Activated CD8-positive, alpha-beta T cell treated with anti-CD3 and anti-CD28 coated beads for 36 hours (primary cell): ENCODE measurements at regions of chr18 and their contacts with region 1.

Region 1: DNA sequence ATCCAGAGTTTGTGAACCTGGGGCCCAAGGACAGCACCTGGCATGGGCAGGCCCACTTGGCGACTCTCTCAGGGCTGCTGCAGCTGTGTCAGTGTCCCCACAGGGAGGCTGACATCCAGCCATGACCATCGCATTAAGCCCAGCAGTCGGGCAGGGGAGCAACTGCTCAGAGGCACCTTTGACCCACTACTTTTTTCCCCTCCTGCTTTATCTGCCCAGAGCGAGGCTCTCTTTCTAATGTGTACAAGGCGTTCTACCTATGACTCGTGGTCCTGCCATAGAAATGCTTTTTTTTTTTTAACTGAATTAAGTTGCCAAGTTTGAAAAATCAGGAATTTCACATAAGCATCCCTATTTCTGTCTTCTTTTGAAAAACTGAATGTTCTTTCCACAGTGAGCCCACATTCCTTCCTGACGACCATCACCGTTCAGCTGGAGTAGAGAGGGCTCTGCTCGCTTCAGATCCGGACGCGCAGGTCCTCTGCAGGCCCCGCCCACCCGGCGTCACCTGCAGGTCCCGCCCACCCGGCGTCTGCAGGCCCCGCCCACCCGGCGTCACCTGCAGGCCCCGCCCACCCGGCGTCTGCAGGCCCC is 403 bp upstream of the CLUL1 start:
- DNase-seq: peak; percentile 3
- ATAC-seq: peak; percentile 76
- H3K4me3 Mint-ChIP-seq: peak overlapping the region; percentile 35
- H3K27ac Mint-ChIP-seq: no peak overlapping the region
- H3K4me1 Mint-ChIP-seq: no peaks in the 10 kb centered on the region
- H3K27me3 Mint-ChIP-seq: peaks cover 20% of the 10 kb centered on the region
- CTCF ChIP-seq: no peak

Region 2: DNA sequence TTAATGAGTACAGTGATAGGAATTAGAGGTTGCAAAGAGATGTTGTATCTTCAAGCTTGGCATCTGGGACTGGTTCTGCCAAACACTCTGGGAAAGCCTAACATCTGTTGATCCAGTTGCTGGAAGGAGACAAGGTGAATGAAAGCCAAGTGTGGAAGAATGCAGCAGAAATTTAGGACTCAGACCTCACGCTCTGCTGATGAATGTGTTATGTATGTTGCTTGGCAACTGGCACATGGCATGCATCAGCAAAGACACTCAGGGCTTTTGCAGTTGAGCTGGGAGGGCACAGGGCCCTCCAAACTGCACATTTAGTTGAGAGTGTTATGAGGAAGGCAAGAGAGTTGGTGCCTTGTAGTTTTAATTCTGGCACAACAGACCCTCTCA is 201.4 kb before region 1 on chr18:
- CTCF ChIA-PET with region 1: no interaction called
- POLR2A ChIA-PET with region 1: no interaction called
- intact Hi-C with region 1: no loop called
- DNase-seq: no peak
- ATAC-seq: no peak
- H3K4me3 Mint-ChIP-seq: no peak overlapping the region
- H3K27ac Mint-ChIP-seq: no peak overlapping the region
- H3K4me1 Mint-ChIP-seq: no peaks in the 10 kb centered on the region
- H3K27me3 Mint-ChIP-seq: no peaks in the 10 kb centered on the region
- CTCF ChIP-seq: no peak

Region 3: GRCh38 chr18:434410-434809 is 162.0 kb before region 1 on chr18:
- CTCF ChIA-PET with region 1: no interaction called
- POLR2A ChIA-PET with region 1: no interaction called
- intact Hi-C with region 1: no loop called
- DNase-seq: no peak
- ATAC-seq: no peak
- H3K4me3 Mint-ChIP-seq: no peak overlapping the region
- H3K27ac Mint-ChIP-seq: no peak overlapping the region
- H3K4me1 Mint-ChIP-seq: no peaks in the 10 kb centered on the region
- H3K27me3 Mint-ChIP-seq: peaks cover 7% of the 10 kb centered on the region
- CTCF ChIP-seq: no peak

Region 4: GRCh38 chr18:567122-567521 is 29.3 kb before region 1 on chr18:
- CTCF ChIA-PET with region 1: no interaction called
- POLR2A ChIA-PET with region 1: no interaction called
- intact Hi-C with region 1: no loop called
- DNase-seq: no peak
- ATAC-seq: no peak
- H3K4me3 Mint-ChIP-seq: no peak overlapping the region
- H3K27ac Mint-ChIP-seq: no peak overlapping the region
- H3K4me1 Mint-ChIP-seq: no peaks in the 10 kb centered on the region
- H3K27me3 Mint-ChIP-seq: peaks cover 4% of the 10 kb centered on the region
- CTCF ChIP-seq: no peak

Region 5: GRCh38 chr18:616380-616995 is 20.1 kb after region 1 on chr18:
- CTCF ChIA-PET with region 1: interaction called, 18 read pairs
- POLR2A ChIA-PET with region 1: no interaction called
- intact Hi-C with region 1: no loop called
- DNase-seq: no peak
- ATAC-seq: peak; percentile 55
- H3K4me3 Mint-ChIP-seq: no peak overlapping the region
- H3K27ac Mint-ChIP-seq: no peak overlapping the region
- H3K4me1 Mint-ChIP-seq: no peaks in the 10 kb centered on the region
- H3K27me3 Mint-ChIP-seq: no peaks in the 10 kb centered on the region
- CTCF ChIP-seq: peak; percentile 58